Heart left ventricle (tissue), 16 donors: ENCODE measurements at regions of chr13 and their contacts with region 1.

Region 1: GRCh38 chr13:19940106-19940505 is 18.4 kb upstream of the ZMYM2 start:
- DNase-seq: no peak
- ATAC-seq: no peak
- H3K4me3 ChIP-seq: no peak overlapping the region
- H3K27ac ChIP-seq: no peak overlapping the region
- H3K4me1 ChIP-seq: no peaks in the 10 kb centered on the region
- H3K27me3 ChIP-seq: peaks cover 0 to 9% (median 0%) of the 10 kb centered on the region in 9 donors
- CTCF ChIP-seq: no peak
- POLR2A ChIP-seq: no peak

Region 2: GRCh38 chr13:19818210-19818842 is 121.8 kb before region 1 on chr13:
- intact Hi-C with region 1: no loop called
- DNase-seq: peak in 3 of 5 donors; percentile 10 to 67 (median 33)
- ATAC-seq: peak in 3 of 4 donors; percentile 54 to 68 (median 56)
- H3K4me3 ChIP-seq: no peak overlapping the region
- H3K27ac ChIP-seq: no peak overlapping the region
- H3K4me1 ChIP-seq: peaks cover 0 to 5% (median 0%) of the 10 kb centered on the region in 12 donors
- H3K27me3 ChIP-seq: no peaks in the 10 kb centered on the region
- CTCF ChIP-seq: peak in 11 of 12 donors; percentile 13 to 50 (median 30)
- POLR2A ChIP-seq: no peak

Region 3: GRCh38 chr13:19882231-19882630 is 57.9 kb before region 1 on chr13:
- intact Hi-C with region 1: loop called in 2 of 10 experiments (anchors 5 to 10 kb)
- DNase-seq: no peak
- ATAC-seq: no peak
- H3K4me3 ChIP-seq: no peak overlapping the region
- H3K27ac ChIP-seq: no peak overlapping the region
- H3K4me1 ChIP-seq: no peaks in the 10 kb centered on the region
- H3K27me3 ChIP-seq: no peaks in the 10 kb centered on the region
- CTCF ChIP-seq: no peak
- POLR2A ChIP-seq: no peak